ENCODE measurements at regions of chr1 and their contacts with region 1.

Region 1: DNA sequence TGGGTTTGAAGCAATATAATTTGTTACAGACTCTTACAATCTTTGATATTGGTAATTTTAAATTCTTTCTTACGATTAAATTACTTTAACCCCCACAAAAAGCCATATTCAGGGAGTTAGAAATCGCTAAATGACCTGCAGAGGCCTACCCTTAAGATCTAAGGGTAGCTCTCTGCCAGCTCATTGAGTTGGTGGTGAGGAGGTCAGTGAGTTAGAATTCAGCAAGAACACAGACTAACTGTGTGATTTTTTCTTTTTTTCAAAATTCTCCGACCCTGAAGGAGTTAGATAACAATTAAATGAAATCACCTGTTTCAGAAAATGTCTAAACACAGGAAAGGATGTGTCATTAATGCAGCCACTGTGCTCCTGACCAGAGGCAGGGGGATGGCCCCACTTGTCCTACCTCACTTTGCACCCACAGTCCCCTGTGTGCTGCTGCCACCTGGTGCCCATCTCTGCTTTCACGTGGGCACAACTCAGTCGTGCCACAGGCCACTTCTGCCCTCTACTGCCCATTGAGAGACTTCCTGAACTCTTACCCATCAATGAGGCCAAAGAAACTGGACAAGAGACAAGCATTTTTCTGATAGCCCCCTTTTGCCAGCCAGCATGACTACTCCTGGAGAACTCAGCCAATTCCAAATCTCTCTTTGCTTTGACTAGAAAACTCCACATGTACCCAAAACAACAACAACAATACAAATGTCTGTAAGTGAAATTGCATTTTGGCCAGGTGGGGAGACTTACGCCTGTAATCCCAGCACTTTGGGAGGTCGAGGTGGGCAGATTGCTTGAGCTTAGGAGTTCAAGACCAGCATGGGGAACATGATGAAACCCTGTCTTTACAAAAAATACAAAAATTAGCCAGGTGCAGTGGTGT is 8.4 kb downstream of the CFAP45 start:
- DNase-seq: peak; percentile 82 to 84
- ATAC-seq: peak; percentile 71 to 90 (median 86)
- H3K4me3 ChIP-seq: no peak overlapping the region
- H3K27ac ChIP-seq: peak overlapping the region in 6 of 10 donors; percentile 39 to 86 (median 80)
- H3K4me1 ChIP-seq: peaks cover 0 to 48% (median 32%) of the 10 kb centered on the region in 9 donors
- H3K27me3 ChIP-seq: no peaks in the 10 kb centered on the region
- CTCF ChIP-seq: peak; percentile 83 to 99 (median 94)

Region 2: GRCh38 chr1:159161001-159161718 is 730.4 kb before region 1 on chr1:
- intact Hi-C with region 1: loop called in 2 of 10 experiments (anchors 10 kb)
- DNase-seq: peak; percentile 50 to 69
- ATAC-seq: peak; percentile 94 to 98 (median 96)
- H3K4me3 ChIP-seq: no peak overlapping the region
- H3K27ac ChIP-seq: peak overlapping the region in 1 of 10 donors; percentile 55
- H3K4me1 ChIP-seq: peaks cover 0 to 11% (median 0%) of the 10 kb centered on the region in 9 donors
- H3K27me3 ChIP-seq: peaks cover 0 to 47% (median 17%) of the 10 kb centered on the region in 7 donors
- CTCF ChIP-seq: peak; percentile 74 to 98 (median 91)

Region 3: DNA sequence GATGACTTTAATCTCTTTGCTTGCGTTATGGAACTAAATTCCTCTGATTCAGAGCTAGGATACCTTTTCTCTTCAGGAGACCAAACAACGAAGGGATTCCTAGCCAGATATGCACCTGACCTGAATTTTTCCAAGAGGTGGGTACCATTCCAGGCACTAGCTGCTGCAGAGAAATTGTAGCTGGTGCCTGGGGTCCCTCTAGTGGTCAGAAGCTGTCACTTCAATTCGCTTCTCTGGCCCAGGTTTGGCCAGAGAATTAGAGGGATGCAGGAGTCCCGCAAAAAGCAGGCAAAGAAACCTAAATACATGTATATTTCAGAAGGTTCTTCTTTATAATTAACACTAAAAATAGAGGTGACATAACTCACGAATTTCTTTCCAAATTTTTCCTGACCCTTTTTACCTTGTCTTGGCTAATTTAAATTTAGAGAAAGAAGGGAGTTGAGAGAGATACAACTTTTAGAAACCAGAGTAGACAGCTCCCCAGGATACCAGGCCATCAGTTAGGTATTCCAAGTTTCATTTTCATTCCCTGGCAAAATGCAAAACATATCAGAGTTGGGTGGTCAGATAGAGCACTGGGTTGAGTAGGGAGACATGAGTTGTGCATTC is 677.3 kb before region 1 on chr1:
- intact Hi-C with region 1: loop called in 3 of 10 experiments (anchors 5 to 10 kb)
- DNase-seq: peak in 1 of 2 donors; percentile 22
- ATAC-seq: peak in 1 of 8 donors; percentile 69
- H3K4me3 ChIP-seq: no peak overlapping the region
- H3K27ac ChIP-seq: no peak overlapping the region
- H3K4me1 ChIP-seq: peaks cover 0 to 14% (median 8%) of the 10 kb centered on the region in 9 donors
- H3K27me3 ChIP-seq: peaks cover 0 to 65% (median 34%) of the 10 kb centered on the region in 7 donors
- CTCF ChIP-seq: peak; percentile 78 to 95 (median 89)

Region 4: GRCh38 chr1:159854693-159855192 is 36.8 kb before region 1 on chr1:
- intact Hi-C with region 1: loop called in 3 of 10 experiments (anchors 5 kb)
- DNase-seq: peak; percentile 88 to 91
- ATAC-seq: peak; percentile 95 to 99 (median 96)
- H3K4me3 ChIP-seq: peak overlapping the region; percentile 63 to 96 (median 76)
- H3K27ac ChIP-seq: peak overlapping the region; percentile 93 to 99 (median 98)
- H3K4me1 ChIP-seq: peaks cover 0 to 32% (median 19%) of the 10 kb centered on the region in 9 donors
- H3K27me3 ChIP-seq: no peaks in the 10 kb centered on the region
- CTCF ChIP-seq: peak in 3 of 9 donors; percentile 26 to 44 (median 26)

Region 5: DNA sequence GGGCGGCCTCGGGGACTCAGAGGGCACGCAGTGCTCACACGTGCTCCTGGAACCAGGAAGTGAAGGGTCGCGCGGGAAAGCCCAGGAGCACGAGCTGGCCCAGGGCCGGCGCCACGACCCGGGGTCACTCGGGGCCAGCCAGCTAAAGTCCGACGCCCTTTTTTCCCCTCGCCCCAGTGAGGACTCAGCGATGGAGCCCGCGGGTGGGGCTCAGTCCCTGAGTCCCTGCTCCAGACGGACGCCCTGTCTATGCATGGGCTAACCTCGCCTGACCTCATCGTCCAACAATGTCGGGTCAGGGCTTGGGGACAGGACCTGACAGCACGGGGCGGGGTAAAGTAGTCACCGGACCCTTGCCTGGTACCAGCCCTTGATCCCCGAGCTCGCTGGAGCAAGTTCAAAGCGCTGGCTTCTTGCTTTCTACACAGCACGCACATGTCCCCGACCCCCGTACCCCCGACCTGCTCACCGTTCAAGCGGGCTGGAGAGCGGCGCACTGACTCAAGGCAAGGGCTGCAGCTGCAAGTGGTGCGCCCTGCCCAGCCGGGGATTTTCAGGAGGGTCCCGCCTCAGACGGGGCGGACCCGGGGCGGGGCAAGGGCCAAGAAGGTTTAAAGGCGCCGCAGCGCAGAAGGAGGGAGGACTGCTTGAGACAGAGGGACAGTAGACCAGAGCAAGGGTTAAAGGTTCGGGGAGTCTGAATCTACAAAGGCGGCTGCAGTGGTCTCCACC is 33.6 kb after region 1 on chr1 and contains the start of gene TAGLN2:
- intact Hi-C with region 1: loop called in 3 of 10 experiments (anchors 2 to 5 kb)
- DNase-seq: peak; percentile 93 to 94
- ATAC-seq: peak; percentile 71 to 88 (median 80)
- H3K4me3 ChIP-seq: peak within 1 kb of the TSS; percentile 67 to 97 (median 83)
- H3K27ac ChIP-seq: peak within 1 kb of the TSS; percentile 94 to 100 (median 98)
- H3K4me1 ChIP-seq: peaks cover 7 to 48% (median 39%) of the 10 kb centered on the region in 9 donors
- H3K27me3 ChIP-seq: no peaks in the 10 kb centered on the region
- CTCF ChIP-seq: no peak
- total RNA-seq, gene TAGLN2: 65.9 to 228 (median 92.5) TPM